ENCODE measurements at regions of chr11 and their contacts with region 1.

Region 1: DNA sequence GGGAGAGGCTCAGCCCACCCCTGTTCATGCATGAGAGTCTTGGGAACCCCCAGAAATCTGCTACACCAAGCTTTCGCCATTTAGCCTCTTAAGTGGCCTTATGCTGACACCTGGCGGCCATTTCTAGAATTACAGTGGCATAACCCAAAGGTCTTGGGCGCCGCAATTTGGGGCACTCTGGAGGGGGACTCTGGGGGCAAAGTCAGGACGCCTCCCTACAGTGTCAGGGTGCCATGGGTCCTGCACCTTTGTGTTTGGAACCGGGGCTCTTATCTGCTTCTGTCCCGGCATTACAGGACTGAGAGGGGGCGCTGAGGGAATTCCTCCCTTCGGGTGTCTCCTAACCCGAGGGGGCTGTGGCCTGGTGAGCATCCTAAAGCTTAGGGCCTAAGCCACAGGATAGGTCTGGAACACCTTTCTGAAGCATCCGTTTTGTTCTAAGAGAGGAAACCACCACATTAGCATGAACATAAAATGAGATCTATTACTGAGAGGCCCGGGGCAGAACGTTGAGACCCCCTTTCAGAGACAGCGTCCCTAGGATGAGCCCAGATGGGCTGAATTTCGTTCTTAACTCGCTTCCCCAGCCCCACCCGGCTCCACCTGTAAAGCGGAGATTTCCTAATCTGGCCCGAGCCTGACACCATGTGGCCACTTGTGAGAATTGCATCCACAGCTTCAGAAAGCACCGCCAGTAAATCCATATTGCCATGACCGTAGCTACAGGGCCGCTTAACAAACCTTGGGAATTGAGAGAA is 9.3 kb downstream of the INS start:
- DNase-seq: peak; percentile 85 to 90
- ATAC-seq: peak; percentile 33 to 53; a peak in 5 of 6 replicates
- H3K4me3 ChIP-seq: no peak overlapping the region
- H3K27ac ChIP-seq: peak overlapping the region; percentile 9 to 63; a peak in 4 of 6 replicates
- H3K4me1 ChIP-seq: no peaks in the 10 kb centered on the region
- CTCF ChIP-seq: peak; percentile 64
- EP300 ChIP-seq: no peak
- POLR2A ChIP-seq: no peak
- RAD21 ChIP-seq: peak; percentile 78 to 89

Region 2: DNA sequence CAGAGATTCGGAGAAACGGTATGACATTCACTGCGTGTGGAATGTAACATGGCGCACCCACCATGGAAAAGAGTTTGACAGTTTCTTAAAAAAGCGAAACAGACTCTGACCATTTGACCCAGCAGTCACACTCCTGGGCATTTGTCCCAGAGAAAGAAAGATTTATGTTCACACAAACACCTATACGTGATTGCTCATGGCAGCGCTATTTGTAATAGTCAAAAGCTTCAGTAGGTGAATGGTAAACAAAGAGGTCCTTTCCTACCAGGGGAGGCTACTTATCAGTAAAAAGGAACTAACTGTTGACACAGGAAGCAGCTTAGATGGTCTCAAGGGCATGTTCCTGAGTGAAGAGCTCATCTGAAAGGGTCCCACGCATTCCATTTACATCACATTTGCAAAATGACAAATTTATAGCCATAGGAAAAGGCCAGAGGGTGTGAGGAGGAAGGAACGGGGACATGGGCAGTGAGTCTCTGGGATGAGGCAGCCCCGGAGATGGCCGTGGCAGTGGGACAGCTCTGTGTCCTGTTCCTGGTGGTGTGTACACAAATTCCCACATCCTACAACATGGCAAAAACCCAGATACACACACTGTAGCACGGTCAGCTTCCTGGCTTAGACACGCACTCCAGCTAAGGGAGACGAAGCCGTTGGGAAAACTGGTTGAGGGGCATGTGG is 469.3 kb before region 1 on chr11:
- CTCF ChIA-PET with region 1: interaction called, 23 read pairs
- POLR2A ChIA-PET with region 1: no interaction called
- DNase-seq: no peak
- ATAC-seq: no peak
- H3K4me3 ChIP-seq: no peak overlapping the region
- H3K27ac ChIP-seq: no peak overlapping the region
- H3K4me1 ChIP-seq: no peaks in the 10 kb centered on the region
- CTCF ChIP-seq: no peak
- EP300 ChIP-seq: no peak
- POLR2A ChIP-seq: no peak
- RAD21 ChIP-seq: no peak

Region 3: DNA sequence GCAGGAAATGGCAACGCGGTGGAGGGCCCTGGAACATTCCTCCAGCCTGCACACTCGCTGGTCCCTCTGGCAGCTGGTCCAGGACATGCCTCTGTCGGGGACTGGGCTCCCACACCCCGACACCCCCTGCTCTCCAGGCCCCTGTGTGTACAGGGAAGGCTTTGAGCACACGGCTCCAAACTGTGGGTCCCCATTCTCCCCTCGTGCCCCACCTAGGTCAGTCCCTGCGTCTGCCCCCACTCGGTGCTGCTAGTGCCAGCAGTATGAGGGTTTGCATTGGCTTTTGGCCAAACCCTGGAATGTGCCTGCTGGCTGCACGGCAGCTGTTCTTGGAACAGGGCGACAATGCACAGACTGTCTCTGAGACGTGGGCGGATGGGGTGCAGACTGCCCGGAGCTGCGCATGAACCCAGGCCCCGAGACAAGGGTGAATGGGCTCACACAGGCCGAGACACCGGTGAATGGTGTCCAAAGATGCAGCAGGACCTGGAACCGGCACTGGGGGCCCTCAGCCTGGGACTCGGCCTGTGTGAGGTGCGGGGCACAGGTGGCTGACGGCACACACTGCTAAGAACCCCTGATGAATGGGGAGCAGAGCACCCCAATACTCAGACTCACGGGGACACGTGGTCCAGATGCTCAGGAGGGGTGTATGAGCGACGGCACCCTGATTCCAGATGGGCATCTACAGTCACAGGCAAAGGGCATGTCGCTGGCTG is 324.4 kb before region 1 on chr11:
- CTCF ChIA-PET with region 1: interaction called, 258 read pairs
- POLR2A ChIA-PET with region 1: no interaction called
- DNase-seq: peak; percentile 41 to 55
- ATAC-seq: peak; percentile 14 to 16; a peak in 3 of 6 replicates
- H3K4me3 ChIP-seq: no peak overlapping the region
- H3K27ac ChIP-seq: peak overlapping the region; percentile 73 to 87
- H3K4me1 ChIP-seq: peaks cover 64% of the 10 kb centered on the region
- CTCF ChIP-seq: no peak
- EP300 ChIP-seq: no peak
- POLR2A ChIP-seq: no peak
- RAD21 ChIP-seq: no peak

Region 4: DNA sequence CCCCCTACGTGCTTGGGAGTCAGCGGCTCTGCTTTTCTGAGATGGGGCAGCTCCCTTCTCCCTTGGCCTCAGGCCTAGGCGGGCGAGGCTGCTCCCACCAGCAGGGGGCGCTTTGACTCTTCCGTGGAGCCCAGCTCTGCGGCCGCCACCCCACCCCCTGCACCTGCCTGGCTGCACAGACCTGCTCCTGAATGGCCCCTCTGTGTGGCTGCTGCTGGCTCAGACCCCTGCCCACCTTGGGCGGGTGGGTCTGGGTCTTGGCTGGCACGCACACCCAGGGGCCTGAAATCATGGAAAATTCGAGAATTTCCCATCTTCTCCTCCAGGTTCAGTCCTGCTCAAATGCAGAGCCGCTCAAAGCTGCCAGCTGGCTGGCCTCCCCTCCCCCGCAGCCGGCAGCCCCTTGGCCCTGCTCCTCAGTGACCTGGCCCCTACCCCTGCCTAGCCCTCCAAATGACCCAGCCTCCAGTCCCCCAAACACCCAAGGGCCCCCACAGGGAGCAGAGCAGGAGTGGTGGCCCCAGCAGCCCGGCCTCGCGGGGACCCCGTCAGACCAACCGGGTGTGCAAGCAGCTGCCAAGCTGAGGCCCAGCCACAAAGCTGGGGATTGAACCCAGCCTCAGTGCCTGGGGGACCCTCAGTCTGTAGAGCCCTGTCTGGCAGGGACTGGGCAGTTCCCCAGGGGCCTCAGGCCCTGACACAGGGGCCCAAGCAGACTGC is 269.0 kb before region 1 on chr11:
- CTCF ChIA-PET with region 1: interaction called, 334 read pairs
- POLR2A ChIA-PET with region 1: no interaction called
- DNase-seq: peak; percentile 73 to 89
- ATAC-seq: peak; percentile 85 to 97
- H3K4me3 ChIP-seq: no peak overlapping the region
- H3K27ac ChIP-seq: no peak overlapping the region; a peak in 1 of 6 replicates
- H3K4me1 ChIP-seq: no peaks in the 10 kb centered on the region
- CTCF ChIP-seq: peak; percentile 81
- EP300 ChIP-seq: no peak
- POLR2A ChIP-seq: no peak
- RAD21 ChIP-seq: peak; percentile 87 to 89

Region 5: GRCh38 chr11:1979607-1980006 is 172.1 kb before region 1 on chr11:
- CTCF ChIA-PET with region 1: interaction called, 18 read pairs
- POLR2A ChIA-PET with region 1: no interaction called
- DNase-seq: no peak
- ATAC-seq: no peak
- H3K4me3 ChIP-seq: no peak overlapping the region
- H3K27ac ChIP-seq: no peak overlapping the region
- H3K4me1 ChIP-seq: no peaks in the 10 kb centered on the region
- CTCF ChIP-seq: no peak
- EP300 ChIP-seq: no peak
- POLR2A ChIP-seq: no peak
- RAD21 ChIP-seq: no peak

Region 6: GRCh38 chr11:2077061-2077802 is 74.4 kb before region 1 on chr11:
- CTCF ChIA-PET with region 1: interaction called, 22 read pairs
- POLR2A ChIA-PET with region 1: no interaction called
- DNase-seq: peak; percentile 51 to 88
- ATAC-seq: peak; percentile 87 to 94
- H3K4me3 ChIP-seq: no peak overlapping the region
- H3K27ac ChIP-seq: peak overlapping the region; percentile 65 to 72
- H3K4me1 ChIP-seq: peaks cover 20% of the 10 kb centered on the region
- CTCF ChIP-seq: no peak
- EP300 ChIP-seq: peak in 1 of 2 experiments; percentile 18; a peak in 1 of 5 replicates
- POLR2A ChIP-seq: no peak
- RAD21 ChIP-seq: no peak

Region 7: GRCh38 chr11:2128130-2128510 is 23.6 kb before region 1 on chr11:
- CTCF ChIA-PET with region 1: interaction called, 152 read pairs
- POLR2A ChIA-PET with region 1: no interaction called
- DNase-seq: no peak
- ATAC-seq: peak; percentile 11 to 26; a peak in 3 of 6 replicates
- H3K4me3 ChIP-seq: no peak overlapping the region
- H3K27ac ChIP-seq: no peak overlapping the region
- H3K4me1 ChIP-seq: no peaks in the 10 kb centered on the region
- CTCF ChIP-seq: no peak
- EP300 ChIP-seq: no peak
- POLR2A ChIP-seq: no peak
- RAD21 ChIP-seq: no peak

Region 8: DNA sequence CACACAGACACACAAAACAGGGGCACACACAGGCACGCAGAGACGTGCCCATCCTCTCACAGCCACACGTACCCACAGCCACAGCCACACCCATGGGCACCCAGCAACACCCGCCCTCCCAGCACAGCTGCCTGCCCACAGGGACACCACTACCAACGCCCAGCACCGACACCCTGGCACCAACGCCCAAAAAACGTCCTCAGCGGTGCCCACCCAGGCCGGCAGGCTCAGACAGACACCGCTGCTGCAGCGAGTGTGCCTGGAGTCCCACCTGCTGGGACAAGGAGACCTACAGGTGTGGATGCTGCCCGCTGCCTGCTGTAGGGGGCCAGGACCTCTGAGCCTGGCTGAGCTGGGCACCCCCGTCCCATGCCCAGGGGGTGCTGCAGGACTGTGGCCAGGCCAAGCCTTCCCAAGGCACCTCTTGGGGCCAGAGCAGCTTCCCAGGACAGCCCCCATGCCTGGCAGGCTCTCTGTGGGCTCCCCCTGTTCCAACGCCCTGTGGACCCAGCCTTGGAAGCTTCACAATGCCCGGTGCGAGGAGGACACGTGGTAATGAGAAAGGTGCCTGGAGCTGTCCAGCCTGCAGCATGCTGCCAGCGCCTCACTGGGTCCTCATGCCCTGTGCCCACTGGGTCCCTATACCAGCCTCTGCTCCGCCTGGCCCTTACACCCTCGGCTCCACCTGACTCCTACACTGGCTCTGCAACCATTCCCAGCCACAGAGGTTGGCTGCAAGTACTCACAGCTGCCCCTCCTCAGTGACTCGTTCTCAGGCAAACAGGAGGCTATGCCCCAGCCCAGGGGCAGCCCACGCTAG is 65.7 kb after region 1 on chr11:
- CTCF ChIA-PET with region 1: no interaction called
- POLR2A ChIA-PET with region 1: no interaction called
- DNase-seq: no peak
- ATAC-seq: no peak
- H3K4me3 ChIP-seq: no peak overlapping the region
- H3K27ac ChIP-seq: no peak overlapping the region
- H3K4me1 ChIP-seq: peaks cover 12% of the 10 kb centered on the region; the same call in 2 of the 3 replicates
- CTCF ChIP-seq: no peak
- EP300 ChIP-seq: no peak
- POLR2A ChIP-seq: no peak
- RAD21 ChIP-seq: no peak